ENCODE measurements at regions of chr18 and their contacts with region 1.

Region 1: DNA sequence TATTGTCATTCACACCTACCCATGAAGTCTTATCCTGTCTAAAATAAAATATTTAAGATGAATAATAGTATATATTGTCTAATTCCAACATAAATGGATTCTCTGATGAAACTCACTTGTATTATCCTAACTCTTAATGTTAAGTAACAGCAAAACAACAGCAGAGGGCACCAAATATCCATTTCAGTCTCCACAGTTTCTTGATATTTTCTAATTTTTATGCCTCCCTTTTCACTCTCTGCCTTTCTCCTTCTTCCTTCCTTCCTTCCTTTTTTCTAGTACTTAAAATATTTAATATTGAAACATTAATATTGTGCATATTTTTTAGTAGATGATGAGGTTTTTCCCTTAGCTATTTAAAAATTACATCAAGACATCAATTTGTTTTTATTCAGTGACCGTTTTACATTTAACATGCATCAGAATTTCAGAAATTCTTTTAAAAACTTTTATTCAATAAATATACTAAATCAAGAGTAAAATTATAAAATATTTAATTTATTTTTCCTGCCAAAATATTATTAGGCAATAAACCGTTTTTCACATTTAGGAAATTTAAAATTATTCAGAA is 97.6 kb downstream of the WDR7 start:
- DNase-seq: peak; percentile 18
- ATAC-seq: no peak
- H3K4me3 ChIP-seq: no peak overlapping the region
- H3K27ac ChIP-seq: no peak overlapping the region
- H3K4me1 ChIP-seq: no peaks in the 10 kb centered on the region
- H3K27me3 ChIP-seq: no peaks in the 10 kb centered on the region
- CTCF ChIP-seq: peak; percentile 53
- EP300 ChIP-seq: no peak
- POLR2A ChIP-seq: no peak
- RAD21 ChIP-seq: no peak

Region 2: GRCh38 chr18:56678836-56679565 is 69.8 kb before region 1 on chr18:
- CTCF ChIA-PET with region 1: no interaction called
- POLR2A ChIA-PET with region 1: no interaction called
- in situ Hi-C with region 1: no loop called
- intact Hi-C with region 1: no loop called
- DNase-seq: peak; percentile 1
- ATAC-seq: no peak
- H3K4me3 ChIP-seq: no peak overlapping the region
- H3K27ac ChIP-seq: no peak overlapping the region
- H3K4me1 ChIP-seq: 0 out of 2 replicates have a peak, but pooled peaks cover 6% of the 10 kb centered on the region
- H3K27me3 ChIP-seq: no peaks in the 10 kb centered on the region; a peak in 1 of 5 replicates
- CTCF ChIP-seq: no peak
- EP300 ChIP-seq: no peak
- POLR2A ChIP-seq: no peak
- RAD21 ChIP-seq: no peak

Region 3: DNA sequence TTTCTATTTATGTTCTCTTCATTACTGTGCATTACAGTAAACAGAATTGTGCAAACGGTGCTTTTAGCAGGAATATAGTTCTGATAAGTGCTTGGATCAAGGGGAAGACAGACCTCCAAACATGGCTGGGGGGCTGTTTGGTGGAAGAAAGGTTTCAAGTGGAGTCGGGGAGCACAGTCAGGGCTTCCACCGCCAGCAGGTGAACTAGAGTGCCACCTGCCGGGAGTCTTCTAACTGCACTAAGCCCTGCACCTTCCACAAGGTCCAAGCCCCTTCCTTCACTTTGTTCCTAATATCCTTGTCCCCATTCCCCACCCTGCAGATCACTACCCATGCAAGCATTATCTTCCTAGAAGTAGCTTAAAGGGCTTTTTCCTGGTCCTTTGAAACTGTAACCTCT is 697.5 kb after region 1 on chr18:
- CTCF ChIA-PET with region 1: interaction called, 4 read pairs
- POLR2A ChIA-PET with region 1: no interaction called
- in situ Hi-C with region 1: loop called (anchors 10 kb)
- intact Hi-C with region 1: no loop called
- DNase-seq: peak; percentile 31
- ATAC-seq: peak; percentile 81
- H3K4me3 ChIP-seq: peak overlapping the region in 2 of 3 experiments; percentile 13 to 49; a peak in 1 of 6 replicates
- H3K27ac ChIP-seq: peak overlapping the region; percentile 71
- H3K4me1 ChIP-seq: peaks cover 53% of the 10 kb centered on the region
- H3K27me3 ChIP-seq: no peaks in the 10 kb centered on the region
- CTCF ChIP-seq: peak; percentile 85
- EP300 ChIP-seq: no peak
- POLR2A ChIP-seq: no peak
- RAD21 ChIP-seq: peak; percentile 59

Measured in HepG2 (cell line).